ENCODE measurements at regions of chr20 and their contacts with region 1.

Region 1: DNA sequence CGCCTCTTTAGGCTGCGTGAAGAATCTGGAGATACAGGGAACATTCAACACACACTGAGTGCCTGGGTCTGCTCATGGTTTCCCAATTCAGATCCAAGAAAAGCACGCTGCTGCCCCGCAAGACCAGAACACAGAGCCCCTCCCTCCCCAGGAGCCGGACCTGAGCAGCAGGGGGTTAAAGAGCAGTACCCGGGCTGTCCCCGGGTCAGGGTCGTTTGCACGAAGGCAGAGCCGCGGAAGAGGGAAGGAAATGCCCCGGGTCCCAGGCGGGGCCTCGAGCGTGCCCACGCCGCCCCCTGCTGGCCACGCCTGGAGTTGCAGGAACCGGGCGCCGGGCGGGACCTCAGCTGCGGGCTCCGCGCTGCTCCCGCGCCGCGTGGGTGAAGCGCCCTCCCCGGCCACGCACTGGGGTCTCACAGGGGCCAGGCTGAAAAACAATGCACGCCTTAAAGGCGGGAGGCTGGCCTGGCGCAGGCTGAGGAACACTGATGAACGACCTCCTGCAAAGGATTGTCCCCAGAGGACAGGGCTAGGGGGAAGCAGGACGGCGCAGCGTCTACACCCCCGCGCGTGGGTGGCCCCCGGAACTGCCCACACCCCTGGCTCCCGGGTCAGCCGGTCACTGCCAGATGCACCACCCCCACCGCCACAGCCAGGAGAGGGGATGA is 48.9 kb downstream of the ANKRD60 start:
- DNase-seq: peak; percentile 79
- ATAC-seq: peak; percentile 90
- H3K4me3 ChIP-seq: peak overlapping the region in 2 of 5 experiments; percentile 15 to 25
- H3K4me3 Mint-ChIP-seq: peak overlapping the region; percentile 34
- H3K27ac ChIP-seq: no peak overlapping the region
- H3K27ac Mint-ChIP-seq: no peak overlapping the region
- H3K4me1 ChIP-seq: peaks cover 10 to 14% of the 10 kb centered on the region in 2 donors
- H3K4me1 Mint-ChIP-seq: peaks cover 9% of the 10 kb centered on the region
- H3K27me3 ChIP-seq: peaks cover 0 to 47% (median 15%) of the 10 kb centered on the region in 4 experiments
- H3K27me3 Mint-ChIP-seq: peaks cover 49% of the 10 kb centered on the region
- CTCF ChIP-seq: peak; percentile 100

Region 2: GRCh38 chr20:57514273-57514751 is 665.3 kb before region 1 on chr20:
- CTCF ChIA-PET with region 1: interaction called, 3 read pairs
- POLR2A ChIA-PET with region 1: no interaction called
- intact Hi-C with region 1: loop called (anchors 1 kb)
- DNase-seq: peak; percentile 60
- ATAC-seq: peak; percentile 54
- H3K4me3 ChIP-seq: no peak overlapping the region
- H3K4me3 Mint-ChIP-seq: no peak overlapping the region
- H3K27ac ChIP-seq: no peak overlapping the region
- H3K27ac Mint-ChIP-seq: no peak overlapping the region
- H3K4me1 ChIP-seq: no peaks in the 10 kb centered on the region
- H3K4me1 Mint-ChIP-seq: no peaks in the 10 kb centered on the region
- H3K27me3 ChIP-seq: peaks cover 0 to 5% (median 0%) of the 10 kb centered on the region in 4 experiments
- H3K27me3 Mint-ChIP-seq: peaks cover 7% of the 10 kb centered on the region
- CTCF ChIP-seq: peak; percentile 62

Region 3: GRCh38 chr20:59474619-59475018 is 1295.1 kb after region 1 on chr20:
- CTCF ChIA-PET with region 1: no interaction called
- POLR2A ChIA-PET with region 1: interaction called, 11 read pairs
- intact Hi-C with region 1: no loop called
- DNase-seq: no peak
- ATAC-seq: no peak
- H3K4me3 ChIP-seq: no peak overlapping the region
- H3K4me3 Mint-ChIP-seq: no peak overlapping the region
- H3K27ac ChIP-seq: no peak overlapping the region
- H3K27ac Mint-ChIP-seq: no peak overlapping the region
- H3K4me1 ChIP-seq: no peaks in the 10 kb centered on the region
- H3K4me1 Mint-ChIP-seq: no peaks in the 10 kb centered on the region
- H3K27me3 ChIP-seq: no peaks in the 10 kb centered on the region
- H3K27me3 Mint-ChIP-seq: peaks cover 8% of the 10 kb centered on the region
- CTCF ChIP-seq: no peak

Measured in B cell (primary cell).